Right lobe of liver (tissue), 6 donors: ENCODE measurements at regions of chr1 and their contacts with region 1.

Region 1: GRCh38 chr1:237684236-237684635 is 206.5 kb downstream of the ZP4 start:
- DNase-seq: no peak
- ATAC-seq: no peak
- H3K4me3 ChIP-seq: no peak overlapping the region
- H3K27ac ChIP-seq: no peak overlapping the region
- H3K4me1 ChIP-seq: no peaks in the 10 kb centered on the region
- H3K27me3 ChIP-seq: no peaks in the 10 kb centered on the region
- CTCF ChIP-seq: no peak
- POLR2A ChIP-seq: no peak

Region 2: DNA sequence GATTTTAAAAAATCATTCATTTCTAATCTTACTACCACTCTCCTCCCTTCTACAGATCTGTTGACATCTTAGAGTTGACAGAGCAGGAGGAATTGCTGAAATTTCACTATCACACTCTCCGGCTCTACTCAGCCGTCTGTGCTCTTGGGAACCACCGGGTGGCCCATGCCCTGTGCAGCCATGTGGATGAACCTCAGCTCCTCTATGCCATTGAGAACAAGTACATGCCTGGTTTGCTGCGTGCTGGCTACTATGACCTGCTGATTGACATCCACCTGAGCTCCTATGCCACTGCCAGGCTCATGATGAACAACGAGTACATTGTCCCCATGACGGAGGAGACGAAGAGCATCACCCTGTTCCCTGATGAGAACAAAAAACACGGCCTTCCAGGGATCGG is 70.3 kb before region 1 on chr1:
- intact Hi-C with region 1: no loop called
- DNase-seq: no peak
- ATAC-seq: no peak
- H3K4me3 ChIP-seq: no peak overlapping the region
- H3K27ac ChIP-seq: no peak overlapping the region
- H3K4me1 ChIP-seq: no peaks in the 10 kb centered on the region
- H3K27me3 ChIP-seq: no peaks in the 10 kb centered on the region
- CTCF ChIP-seq: no peak
- POLR2A ChIP-seq: no peak

Region 3: GRCh38 chr1:237736372-237737029 is 52.3 kb after region 1 on chr1:
- intact Hi-C with region 1: no loop called
- DNase-seq: no peak
- ATAC-seq: peak in 2 of 4 donors; percentile 22 to 25
- H3K4me3 ChIP-seq: no peak overlapping the region
- H3K27ac ChIP-seq: no peak overlapping the region
- H3K4me1 ChIP-seq: no peaks in the 10 kb centered on the region
- H3K27me3 ChIP-seq: no peaks in the 10 kb centered on the region
- CTCF ChIP-seq: peak; percentile 16 to 21 (median 19)
- POLR2A ChIP-seq: no peak

Region 4: GRCh38 chr1:237799762-237800474 is 115.7 kb after region 1 on chr1:
- intact Hi-C with region 1: loop called (anchors 5 to 10 kb)
- DNase-seq: peak; percentile 85 to 91 (median 88)
- ATAC-seq: peak; percentile 100
- H3K4me3 ChIP-seq: no peak overlapping the region
- H3K27ac ChIP-seq: no peak overlapping the region
- H3K4me1 ChIP-seq: no peaks in the 10 kb centered on the region
- H3K27me3 ChIP-seq: no peaks in the 10 kb centered on the region
- CTCF ChIP-seq: peak; percentile 55 to 73 (median 70)
- POLR2A ChIP-seq: no peak